CD8-positive, alpha-beta memory T cell (primary cell): ENCODE measurements at regions of chr19 and their contacts with region 1.

Region 1: GRCh38 chr19:38734426-38735256 is 9.6 kb downstream of the CAPN12 start:
- DNase-seq: peak in 4 of 5 donors; percentile 29 to 64 (median 42)
- H3K4me3 ChIP-seq: peak overlapping the region; percentile 56
- H3K4me3 Mint-ChIP-seq: peak overlapping the region; percentile 83 to 91 (median 88)
- H3K27ac ChIP-seq: peak overlapping the region; percentile 54
- H3K27ac Mint-ChIP-seq: peak overlapping the region; percentile 86 to 97 (median 88)
- H3K4me1 ChIP-seq: peaks cover 25% of the 10 kb centered on the region
- H3K4me1 Mint-ChIP-seq: peaks cover 39 to 73% (median 40%) of the 10 kb centered on the region in 3 donors
- H3K27me3 ChIP-seq: no peaks in the 10 kb centered on the region
- H3K27me3 Mint-ChIP-seq: peaks cover 0 to 4% of the 10 kb centered on the region in 2 donors

Region 2: GRCh38 chr19:38769635-38770211 is 35.1 kb after region 1 on chr19:
- CTCF ChIA-PET with region 1: interaction called, 10 read pairs
- POLR2A ChIA-PET with region 1: interaction called, 6 read pairs
- DNase-seq: peak; percentile 86 to 93 (median 91)
- H3K4me3 ChIP-seq: no peak overlapping the region
- H3K4me3 Mint-ChIP-seq: peak overlapping the region; percentile 53 to 66 (median 60)
- H3K27ac ChIP-seq: no peak overlapping the region
- H3K27ac Mint-ChIP-seq: peak overlapping the region; percentile 63 to 94 (median 88)
- H3K4me1 ChIP-seq: peaks cover 6% of the 10 kb centered on the region
- H3K4me1 Mint-ChIP-seq: peaks cover 6 to 10% (median 7%) of the 10 kb centered on the region in 3 donors
- H3K27me3 ChIP-seq: no peaks in the 10 kb centered on the region
- H3K27me3 Mint-ChIP-seq: no peaks in the 10 kb centered on the region

Region 3: DNA sequence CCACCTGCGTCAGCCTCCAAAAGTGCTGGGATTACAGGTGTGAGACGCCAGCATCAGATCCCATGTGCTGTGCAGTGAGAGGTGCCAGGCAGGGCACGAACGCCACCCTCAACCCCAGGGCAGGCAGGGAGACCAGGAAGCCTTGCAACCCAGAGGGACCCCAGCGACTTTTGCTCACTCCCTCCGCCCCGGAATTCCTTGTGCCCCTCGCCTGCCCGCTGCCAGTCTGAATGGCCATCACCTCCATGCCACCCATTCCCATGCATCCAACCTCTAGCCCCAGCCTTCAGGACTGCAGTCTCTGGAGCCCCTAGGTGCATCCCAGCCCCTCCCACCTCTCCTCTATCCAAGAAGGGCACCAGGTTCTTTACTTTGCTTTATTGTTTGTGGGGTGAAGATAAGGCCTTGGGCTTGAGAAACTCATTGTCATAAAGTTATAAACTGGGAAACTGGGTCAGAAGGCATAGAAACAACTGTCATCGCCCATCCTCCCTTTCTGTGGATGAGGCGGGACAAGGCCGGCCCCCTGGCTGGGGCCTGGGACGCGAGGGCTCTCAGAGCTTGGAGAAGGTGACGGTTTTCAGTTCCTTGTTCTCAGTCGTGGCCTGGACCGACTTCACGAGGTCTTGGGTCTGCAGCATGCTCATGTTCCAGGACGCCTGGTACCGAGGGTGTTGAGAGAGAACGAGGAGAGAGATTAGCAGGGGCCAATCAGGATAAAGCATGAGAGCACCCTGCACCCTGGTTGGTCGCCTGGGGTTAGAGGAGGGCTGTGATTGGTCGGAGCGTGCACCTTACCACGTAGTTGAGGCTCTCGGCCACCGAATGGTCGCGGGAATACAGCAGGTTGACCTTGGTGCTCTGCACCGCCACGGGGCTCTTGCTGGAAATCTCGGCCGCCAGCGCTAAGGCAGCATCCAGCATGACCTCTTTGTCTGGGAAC is 80.7 kb after region 1 on chr19:
- CTCF ChIA-PET with region 1: no interaction called
- POLR2A ChIA-PET with region 1: no interaction called
- DNase-seq: no peak
- H3K4me3 ChIP-seq: no peak overlapping the region
- H3K4me3 Mint-ChIP-seq: no peak overlapping the region
- H3K27ac ChIP-seq: no peak overlapping the region
- H3K27ac Mint-ChIP-seq: no peak overlapping the region
- H3K4me1 ChIP-seq: no peaks in the 10 kb centered on the region
- H3K4me1 Mint-ChIP-seq: peaks cover 0 to 6% (median under 1%) of the 10 kb centered on the region in 3 donors
- H3K27me3 ChIP-seq: no peaks in the 10 kb centered on the region
- H3K27me3 Mint-ChIP-seq: no peaks in the 10 kb centered on the region